Esophagus muscularis mucosa (tissue), 4 donors: ENCODE measurements at regions of chr9 and their contacts with region 1.

Region 1: DNA sequence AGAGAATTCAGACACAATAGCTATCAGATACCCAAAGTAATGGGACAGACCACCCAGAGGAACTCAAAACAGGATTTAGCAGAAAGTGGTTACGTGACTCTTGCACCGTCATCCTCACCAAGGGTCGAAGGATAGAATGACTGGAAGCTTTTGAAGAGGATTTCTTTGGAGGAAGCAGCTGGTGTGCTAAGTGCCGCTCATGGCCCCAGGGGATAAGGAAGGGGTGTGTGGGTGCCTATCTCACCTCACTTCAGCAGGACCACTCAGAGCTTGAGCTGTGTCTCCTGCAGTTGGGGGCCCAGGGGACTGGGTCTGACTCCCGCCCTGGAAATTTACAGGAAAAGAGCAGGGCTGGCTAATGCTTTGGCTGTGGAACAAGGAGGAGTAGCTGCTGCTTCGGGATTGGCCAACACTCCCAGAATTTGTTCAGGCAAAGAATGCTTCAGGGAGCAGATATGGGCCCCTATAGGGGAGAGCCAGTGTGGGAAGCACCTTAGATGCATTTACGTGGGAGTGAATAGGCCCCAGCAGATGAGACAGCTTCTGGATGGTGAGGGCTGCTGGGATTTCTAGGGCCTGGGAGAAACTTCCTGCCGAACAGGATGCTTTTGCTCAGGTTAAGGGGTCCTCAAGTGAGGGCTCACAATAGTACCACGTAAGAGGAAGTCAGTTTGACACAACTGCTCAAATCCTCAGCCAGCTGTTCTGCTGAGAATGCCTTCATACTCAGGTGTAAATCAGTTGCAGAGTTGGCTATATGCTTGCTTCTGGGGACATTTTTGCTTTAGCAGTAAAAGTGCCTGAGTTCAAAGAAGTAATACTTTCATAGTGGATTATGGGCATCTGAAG is 29.1 kb upstream of the TOMM5 start:
- DNase-seq: no peak
- H3K4me3 ChIP-seq: no peak overlapping the region
- H3K27ac ChIP-seq: no peak overlapping the region
- H3K4me1 ChIP-seq: no peaks in the 10 kb centered on the region
- H3K27me3 ChIP-seq: peaks cover 0 to 6% (median 0%) of the 10 kb centered on the region in 4 donors
- CTCF ChIP-seq: no peak
- EP300 ChIP-seq: no peak
- POLR2A ChIP-seq: no peak

Region 2: DNA sequence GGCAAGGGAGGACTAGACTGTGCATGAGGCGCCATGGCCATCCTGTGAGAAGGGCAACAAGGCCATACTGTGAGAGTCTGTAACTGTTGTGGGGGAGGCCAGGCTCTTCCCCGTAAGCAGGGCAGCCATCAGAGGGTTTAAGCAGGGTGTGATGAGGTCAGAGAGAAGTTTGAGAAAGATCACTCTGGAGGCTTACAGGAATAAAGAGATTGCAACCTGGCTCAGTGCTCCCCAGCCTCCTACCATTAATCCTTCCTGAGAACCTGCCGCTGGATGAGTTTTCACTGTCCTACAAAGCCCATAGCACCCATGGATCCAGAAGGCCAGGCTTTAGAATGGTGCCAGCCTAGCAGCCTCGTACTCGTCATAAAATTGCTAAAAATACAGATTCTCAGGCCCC is 117.7 kb after region 1 on chr9:
- intact Hi-C with region 1: loop called (anchors 5 kb)
- DNase-seq: no peak
- H3K4me3 ChIP-seq: no peak overlapping the region
- H3K27ac ChIP-seq: no peak overlapping the region
- H3K4me1 ChIP-seq: no peaks in the 10 kb centered on the region
- H3K27me3 ChIP-seq: no peaks in the 10 kb centered on the region
- CTCF ChIP-seq: no peak
- EP300 ChIP-seq: no peak
- POLR2A ChIP-seq: no peak

Region 3: GRCh38 chr9:37953775-37954437 is 332.4 kb after region 1 on chr9:
- intact Hi-C with region 1: no loop called
- DNase-seq: no peak
- H3K4me3 ChIP-seq: no peak overlapping the region
- H3K27ac ChIP-seq: peak overlapping the region; percentile 46 to 62 (median 52)
- H3K4me1 ChIP-seq: peaks cover 21 to 46% (median 27%) of the 10 kb centered on the region in 4 donors
- H3K27me3 ChIP-seq: no peaks in the 10 kb centered on the region
- CTCF ChIP-seq: no peak
- EP300 ChIP-seq: no peak
- POLR2A ChIP-seq: no peak